GM12878 (cell line): ENCODE measurements at regions of chr15 and their contacts with region 1.

Region 1: DNA sequence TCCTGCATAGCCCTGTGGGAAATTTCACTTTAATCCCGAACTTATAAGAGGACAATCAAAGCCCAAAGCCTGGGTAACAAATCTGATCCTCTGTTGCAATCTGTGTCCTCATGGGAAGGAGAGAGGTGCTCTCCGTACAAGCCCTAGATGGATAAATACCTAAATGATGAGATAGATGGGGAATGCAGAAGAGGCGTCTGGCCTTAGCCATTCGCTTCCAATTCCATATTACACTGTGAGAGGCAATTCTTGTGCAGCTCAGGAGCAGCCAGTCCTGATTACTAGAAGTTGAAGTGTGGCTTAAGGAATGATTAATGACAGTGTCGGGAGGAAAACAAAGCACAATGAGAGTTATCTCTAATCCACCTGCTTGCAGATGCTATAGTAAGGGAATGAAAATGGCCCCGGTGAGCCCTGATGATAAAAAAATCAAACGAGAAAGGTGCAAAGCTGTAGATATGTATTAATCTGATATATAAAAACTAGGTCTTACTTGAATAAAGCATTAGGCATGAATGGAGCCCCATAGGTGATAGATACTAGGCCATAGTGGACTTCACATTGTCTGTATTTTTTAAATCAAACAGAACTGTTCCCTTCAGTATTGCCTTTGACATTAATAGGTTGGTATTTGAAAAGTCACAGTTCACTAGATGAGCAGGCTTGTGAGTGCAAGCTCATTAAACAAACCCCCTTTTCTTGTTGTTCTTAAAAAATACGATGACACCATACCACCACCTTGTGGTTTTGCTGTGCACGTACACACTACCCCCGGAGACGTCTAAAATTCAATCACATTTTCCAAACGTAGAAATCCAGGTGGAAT is 54.2 kb upstream of the TMCO5A start:
- DNase-seq: no peak
- ATAC-seq: peak; percentile 57
- H3K4me3 ChIP-seq: no peak overlapping the region
- H3K27ac ChIP-seq: no peak overlapping the region
- H3K4me1 ChIP-seq: no peaks in the 10 kb centered on the region
- H3K27me3 ChIP-seq: no peaks in the 10 kb centered on the region
- CTCF ChIP-seq: peak; percentile 36 to 65 (median 57); a peak in 5 of 6 replicates
- EP300 ChIP-seq: no peak
- POLR2A ChIP-seq: no peak
- RAD21 ChIP-seq: peak; percentile 55

Region 2: GRCh38 chr15:37134699-37135131 is 745.5 kb before region 1 on chr15:
- CTCF ChIA-PET with region 1: interaction called, 3 read pairs
- POLR2A ChIA-PET with region 1: no interaction called
- RAD21 ChIA-PET with region 1: no interaction called
- SMC1A ChIA-PET with region 1: no interaction called
- in situ Hi-C with region 1: no loop called
- intact Hi-C with region 1: loop called (anchors 10 kb)
- DNase-seq: no peak
- ATAC-seq: peak; percentile 80
- H3K4me3 ChIP-seq: no peak overlapping the region
- H3K27ac ChIP-seq: no peak overlapping the region
- H3K4me1 ChIP-seq: peaks cover 4% of the 10 kb centered on the region; the same call in 1 of the 2 replicates
- H3K27me3 ChIP-seq: peaks cover 0 to 2% of the 10 kb centered on the region in 2 experiments; a peak in 2 of 4 replicates
- CTCF ChIP-seq: peak; percentile 53 to 60 (median 55); a peak in 5 of 6 replicates
- EP300 ChIP-seq: no peak
- POLR2A ChIP-seq: no peak
- RAD21 ChIP-seq: peak; percentile 34

Region 3: GRCh38 chr15:37682304-37682703 is 197.9 kb before region 1 on chr15:
- CTCF ChIA-PET with region 1: interaction called, 7 read pairs
- POLR2A ChIA-PET with region 1: no interaction called
- RAD21 ChIA-PET with region 1: interaction called, 3 read pairs
- SMC1A ChIA-PET with region 1: interaction called, 8 read pairs
- in situ Hi-C with region 1: no loop called
- intact Hi-C with region 1: loop called (anchors 1 kb)
- DNase-seq: no peak
- ATAC-seq: no peak
- H3K4me3 ChIP-seq: no peak overlapping the region
- H3K27ac ChIP-seq: no peak overlapping the region
- H3K4me1 ChIP-seq: no peaks in the 10 kb centered on the region
- H3K27me3 ChIP-seq: no peaks in the 10 kb centered on the region
- CTCF ChIP-seq: no peak; a peak in 1 of 6 replicates
- EP300 ChIP-seq: no peak
- POLR2A ChIP-seq: no peak
- RAD21 ChIP-seq: no peak

Region 4: DNA sequence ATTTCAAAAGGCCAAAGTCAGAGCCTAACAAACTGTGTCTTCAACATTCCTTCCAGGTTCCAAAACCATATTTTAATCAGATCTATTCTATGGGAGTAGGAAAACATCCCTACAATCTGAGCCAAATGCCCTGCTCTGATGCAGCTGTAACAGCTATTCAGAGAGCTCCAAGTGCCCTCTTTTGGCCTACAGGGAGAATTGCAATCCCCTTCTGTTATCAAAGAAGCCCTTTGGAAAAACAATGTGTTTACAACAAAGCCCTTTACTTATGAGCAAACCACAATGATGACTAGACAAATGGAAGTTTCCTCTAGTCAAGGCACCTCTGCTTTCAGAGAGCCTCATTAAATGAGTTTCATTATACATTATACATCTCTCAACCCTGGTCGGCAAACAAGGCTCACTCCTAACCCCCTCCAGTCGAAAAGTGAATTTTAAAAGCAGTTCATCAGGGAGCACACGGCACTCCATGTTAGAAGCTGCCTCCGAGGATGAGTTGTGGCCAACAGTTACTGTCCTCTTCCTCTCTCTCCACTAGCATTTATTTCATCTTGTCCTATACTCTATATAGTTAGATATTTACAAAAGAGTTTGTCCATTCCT is 11.6 kb after region 1 on chr15:
- CTCF ChIA-PET with region 1: interaction called, 22 read pairs
- POLR2A ChIA-PET with region 1: no interaction called
- RAD21 ChIA-PET with region 1: interaction called, 4 read pairs
- SMC1A ChIA-PET with region 1: interaction called, 8 read pairs
- in situ Hi-C with region 1: no loop called
- intact Hi-C with region 1: no loop called
- DNase-seq: no peak
- ATAC-seq: peak; percentile 75
- H3K4me3 ChIP-seq: no peak overlapping the region
- H3K27ac ChIP-seq: no peak overlapping the region
- H3K4me1 ChIP-seq: no peaks in the 10 kb centered on the region
- H3K27me3 ChIP-seq: no peaks in the 10 kb centered on the region
- CTCF ChIP-seq: peak; percentile 72 to 76 (median 75)
- EP300 ChIP-seq: no peak
- POLR2A ChIP-seq: no peak
- RAD21 ChIP-seq: peak; percentile 73

Region 5: GRCh38 chr15:37984368-37984767 is 104.1 kb after region 1 on chr15:
- CTCF ChIA-PET with region 1: no interaction called
- POLR2A ChIA-PET with region 1: no interaction called
- RAD21 ChIA-PET with region 1: no interaction called
- SMC1A ChIA-PET with region 1: no interaction called
- in situ Hi-C with region 1: no loop called
- intact Hi-C with region 1: no loop called
- DNase-seq: no peak
- ATAC-seq: no peak
- H3K4me3 ChIP-seq: no peak overlapping the region
- H3K27ac ChIP-seq: no peak overlapping the region
- H3K4me1 ChIP-seq: no peaks in the 10 kb centered on the region
- H3K27me3 ChIP-seq: no peaks in the 10 kb centered on the region
- CTCF ChIP-seq: no peak
- EP300 ChIP-seq: no peak
- POLR2A ChIP-seq: no peak
- RAD21 ChIP-seq: no peak